ENCODE measurements at regions of chr3 and their contacts with region 1.

Region 1: GRCh38 chr3:196251918-196252317 is 35.6 kb downstream of the SLC51A start:
- DNase-seq: no peak
- H3K4me3 ChIP-seq: no peak overlapping the region
- H3K27ac ChIP-seq: no peak overlapping the region
- H3K4me1 ChIP-seq: no peaks in the 10 kb centered on the region
- H3K27me3 ChIP-seq: no peaks in the 10 kb centered on the region
- CTCF ChIP-seq: no peak

Region 2: DNA sequence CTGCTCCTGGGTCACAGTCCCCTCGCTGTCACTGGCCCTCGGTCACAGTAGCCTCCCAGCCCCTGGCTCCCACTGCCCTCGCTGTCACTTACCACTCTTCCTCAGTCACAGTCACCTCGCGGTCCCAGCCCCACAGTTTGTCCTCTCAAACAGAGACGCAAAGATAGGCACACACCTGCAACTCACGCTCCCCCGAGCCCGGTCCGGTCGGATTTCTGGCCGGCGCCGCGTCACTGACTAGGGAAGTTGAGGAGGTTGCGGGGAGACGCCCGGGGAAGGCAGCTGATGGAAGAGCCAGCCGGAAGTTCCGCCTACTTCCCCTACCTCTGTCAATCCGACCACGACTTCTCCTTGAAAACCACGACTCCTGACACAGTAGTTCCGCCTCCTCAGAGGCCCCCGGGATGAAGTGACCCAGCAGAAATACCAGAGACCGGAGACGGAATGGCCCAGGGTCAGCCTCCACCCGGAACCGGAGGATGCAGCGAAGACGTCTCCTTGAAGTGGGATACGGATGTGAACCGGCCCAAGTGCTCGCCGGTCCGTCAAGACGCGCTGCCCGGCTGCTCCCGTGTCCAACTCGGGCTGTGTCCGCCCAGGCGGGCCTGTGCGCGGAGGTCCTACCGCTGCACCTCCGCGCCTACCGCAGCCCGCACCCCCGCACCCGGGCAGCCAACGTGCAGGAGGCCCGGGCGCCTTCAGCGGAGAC is 35.7 kb after region 1 on chr3 and contains the start of gene PCYT1A:
- CTCF ChIA-PET with region 1: no interaction called
- POLR2A ChIA-PET with region 1: no interaction called
- intact Hi-C with region 1: no loop called
- DNase-seq: peak; percentile 93 to 96
- H3K4me3 ChIP-seq: peak within 1 kb of the TSS; percentile 71
- H3K27ac ChIP-seq: peak within 1 kb of the TSS; percentile 81
- H3K4me1 ChIP-seq: peaks cover 19% of the 10 kb centered on the region
- H3K27me3 ChIP-seq: no peaks in the 10 kb centered on the region
- CTCF ChIP-seq: no peak
- total RNA-seq, gene PCYT1A: 74.4 and 91.2 TPM in 2 replicates

Region 3: DNA sequence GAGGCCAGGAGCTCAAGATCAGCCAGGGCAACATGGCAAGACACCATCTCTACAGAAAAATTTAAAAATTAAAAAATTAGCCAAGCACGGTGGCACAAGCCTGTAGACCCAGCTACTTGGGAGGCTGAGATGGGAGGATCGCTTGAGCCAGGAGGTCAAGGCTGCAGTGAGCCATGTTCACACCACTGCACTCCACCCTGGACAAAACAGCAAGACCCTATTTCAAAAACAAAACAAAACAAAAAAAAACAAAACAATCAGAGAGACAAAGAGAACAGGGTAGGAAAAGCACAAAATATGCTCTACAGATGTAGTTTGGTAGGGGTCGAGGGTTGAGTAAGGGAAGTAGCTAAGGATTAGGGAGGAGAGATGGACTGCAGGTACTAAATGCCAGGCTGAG is 62.7 kb after region 1 on chr3:
- CTCF ChIA-PET with region 1: no interaction called
- POLR2A ChIA-PET with region 1: interaction called, 12 read pairs
- intact Hi-C with region 1: no loop called
- DNase-seq: no peak
- H3K4me3 ChIP-seq: no peak overlapping the region
- H3K27ac ChIP-seq: no peak overlapping the region
- H3K4me1 ChIP-seq: no peaks in the 10 kb centered on the region
- H3K27me3 ChIP-seq: no peaks in the 10 kb centered on the region
- CTCF ChIP-seq: no peak

Region 4: DNA sequence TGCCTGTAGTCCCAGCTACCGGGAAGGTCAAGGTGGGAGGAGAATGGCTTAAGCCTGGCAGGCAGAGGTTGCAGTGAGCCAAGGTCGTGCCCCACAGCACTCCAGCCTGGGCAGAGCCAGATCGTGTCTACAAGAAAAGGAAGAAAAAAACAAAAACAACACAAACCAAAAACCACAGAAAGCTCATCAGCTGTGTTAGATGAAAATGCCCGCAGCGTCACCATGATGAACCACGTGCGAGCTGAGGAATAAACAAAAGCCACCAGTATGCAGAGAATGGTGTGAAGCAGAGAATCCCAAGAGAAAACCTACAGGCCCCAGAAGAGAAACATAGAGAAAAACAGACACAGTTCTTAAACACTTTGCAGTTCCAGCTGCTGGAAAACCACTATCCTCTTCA is 106.0 kb after region 1 on chr3:
- CTCF ChIA-PET with region 1: no interaction called
- POLR2A ChIA-PET with region 1: no interaction called
- intact Hi-C with region 1: loop called (anchors 5 kb)
- DNase-seq: no peak
- H3K4me3 ChIP-seq: no peak overlapping the region
- H3K27ac ChIP-seq: no peak overlapping the region
- H3K4me1 ChIP-seq: no peaks in the 10 kb centered on the region
- H3K27me3 ChIP-seq: no peaks in the 10 kb centered on the region
- CTCF ChIP-seq: no peak

Measured in PC-9 (cell line).